Activated CD8-positive, alpha-beta T cell treated with anti-CD3 and anti-CD28 coated beads, Interleukin-2, amount 10 ng/mL, durations not matched to agents 7 days and 5 days (primary cell): ENCODE measurements at regions of chr16 and their contacts with region 1.

Region 1: DNA sequence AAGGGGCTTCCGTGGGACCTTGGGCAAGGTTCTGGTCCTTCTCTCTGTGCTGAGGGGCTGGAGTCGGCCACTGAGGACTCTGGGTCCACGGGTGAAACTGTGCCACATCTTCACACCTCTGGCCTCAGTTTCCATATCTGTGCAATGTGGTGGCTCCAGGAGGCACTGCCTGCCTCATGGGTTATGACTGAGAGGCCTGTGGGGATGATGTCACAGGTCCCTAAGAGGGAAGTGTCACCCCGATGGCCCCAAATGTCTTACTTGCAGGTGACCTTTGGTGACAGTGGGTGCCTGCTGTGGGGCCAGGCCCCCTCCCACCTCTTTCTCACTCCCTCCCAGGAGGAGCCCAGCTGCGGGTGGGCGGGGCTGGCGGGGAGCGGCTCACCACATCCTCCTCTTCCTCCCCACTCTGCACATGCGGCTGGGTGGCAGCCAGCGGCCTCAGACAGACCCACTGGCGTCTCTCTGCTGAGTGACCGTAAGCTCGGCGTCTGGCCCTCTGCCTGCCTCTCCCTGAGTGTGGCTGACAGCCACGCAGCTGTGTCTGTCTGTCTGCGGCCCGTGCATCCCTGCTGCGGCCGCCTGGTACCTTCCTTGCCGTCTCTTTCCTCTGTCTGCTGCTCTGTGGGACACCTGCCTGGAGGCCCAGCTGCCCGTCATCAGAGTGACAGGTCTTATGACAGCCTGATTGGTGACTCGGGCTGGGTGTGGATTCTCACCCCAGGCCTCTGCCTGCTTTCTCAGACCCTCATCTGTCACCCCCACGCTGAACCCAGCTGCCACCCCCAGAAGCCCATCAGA is at the start of gene IL21R:
- DNase-seq: peak; percentile 90
- ATAC-seq: peak; percentile 81
- H3K4me3 Mint-ChIP-seq: peak within 1 kb of the TSS; percentile 97
- H3K27ac Mint-ChIP-seq: peak within 1 kb of the TSS; percentile 94
- H3K4me1 Mint-ChIP-seq: peaks cover 68% of the 10 kb centered on the region
- H3K27me3 Mint-ChIP-seq: no peaks in the 10 kb centered on the region
- total RNA-seq, gene IL21R: 23.5 to 24.2 TPM

Region 2: DNA sequence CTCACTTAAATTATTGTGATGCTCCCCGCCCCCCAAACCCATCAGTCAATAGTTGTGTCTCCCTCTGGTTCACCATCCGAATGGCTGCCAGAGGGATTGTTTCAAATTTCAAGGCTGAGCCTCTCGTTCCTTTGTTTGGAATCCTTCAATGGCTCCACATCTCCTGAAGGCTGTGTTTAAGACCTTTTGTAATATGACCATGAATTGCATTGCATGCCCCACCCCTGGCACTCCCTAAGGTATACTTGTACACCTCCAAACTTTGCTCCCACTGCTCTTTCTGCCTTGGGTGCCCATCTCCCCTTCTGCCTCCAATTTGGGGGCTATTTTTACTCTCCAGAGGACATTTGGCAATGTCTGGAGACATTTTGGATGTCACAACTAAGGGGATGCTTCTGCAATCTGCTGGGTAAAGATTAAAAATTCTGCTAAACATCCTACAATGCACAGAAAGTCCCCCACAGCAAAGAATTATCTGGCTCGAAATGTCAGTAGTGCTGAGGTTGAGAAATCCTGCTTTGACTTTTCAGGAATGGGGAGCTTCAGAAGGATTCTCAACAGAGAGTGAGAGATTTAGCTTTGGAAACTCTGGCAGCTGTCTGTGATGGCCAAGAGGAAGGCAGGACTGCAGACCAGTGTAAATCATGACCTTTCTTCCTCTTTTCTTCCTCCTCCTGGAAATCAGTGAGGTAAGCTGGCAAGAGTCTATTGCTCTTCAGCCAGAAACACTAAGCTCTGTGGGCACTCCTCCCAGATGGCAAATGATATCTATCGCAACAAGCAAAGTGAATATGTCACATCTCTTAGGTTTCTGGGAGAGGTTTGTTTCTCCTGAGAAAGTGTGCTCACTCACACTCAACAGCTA is 96.9 kb before region 1 on chr16:
- CTCF ChIA-PET with region 1: no interaction called
- POLR2A ChIA-PET with region 1: no interaction called
- DNase-seq: no peak
- ATAC-seq: no peak
- H3K4me3 Mint-ChIP-seq: no peak overlapping the region
- H3K27ac Mint-ChIP-seq: no peak overlapping the region
- H3K4me1 Mint-ChIP-seq: peaks cover 13% of the 10 kb centered on the region
- H3K27me3 Mint-ChIP-seq: peaks cover 2% of the 10 kb centered on the region

Region 3: DNA sequence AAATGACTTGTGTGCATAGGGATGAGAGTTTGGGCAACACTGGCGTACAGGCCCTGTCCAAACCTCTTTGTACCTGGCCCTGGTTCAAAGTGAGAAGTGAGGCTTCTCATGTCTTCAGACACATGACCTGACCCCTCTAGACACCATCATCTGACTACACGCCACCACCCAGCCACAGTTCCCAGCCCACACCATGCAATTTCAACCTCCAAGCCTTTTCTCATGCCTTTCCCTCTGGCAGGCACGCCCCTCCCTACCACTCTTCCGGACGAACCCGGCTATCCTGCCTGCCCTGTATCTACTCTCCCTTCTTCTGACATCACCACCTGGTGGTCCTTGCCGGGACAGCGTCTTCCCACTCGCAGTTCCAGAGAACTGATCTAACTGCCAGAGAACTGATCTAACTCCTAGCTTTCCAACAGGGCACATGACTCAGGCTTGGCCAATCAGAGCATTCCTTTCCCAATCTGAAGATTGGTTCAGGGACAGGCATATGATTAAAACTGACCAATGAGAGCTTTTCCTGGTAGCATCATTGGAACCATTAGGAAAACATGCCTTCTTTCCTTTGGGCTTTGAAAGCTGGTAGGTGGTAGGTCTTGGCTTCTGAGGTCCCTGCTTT is 27.1 kb before region 1 on chr16:
- CTCF ChIA-PET with region 1: interaction called, 84 read pairs
- POLR2A ChIA-PET with region 1: interaction called, 100 read pairs
- DNase-seq: peak; percentile 61
- ATAC-seq: peak; percentile 47
- H3K4me3 Mint-ChIP-seq: no peak overlapping the region
- H3K27ac Mint-ChIP-seq: no peak overlapping the region
- H3K4me1 Mint-ChIP-seq: peaks cover 45% of the 10 kb centered on the region
- H3K27me3 Mint-ChIP-seq: no peaks in the 10 kb centered on the region

Region 4: GRCh38 chr16:27387724-27388123 is 14.2 kb before region 1 on chr16:
- CTCF ChIA-PET with region 1: interaction called, 11 read pairs
- POLR2A ChIA-PET with region 1: interaction called, 16 read pairs
- DNase-seq: no peak
- ATAC-seq: no peak
- H3K4me3 Mint-ChIP-seq: no peak overlapping the region
- H3K27ac Mint-ChIP-seq: no peak overlapping the region
- H3K4me1 Mint-ChIP-seq: peaks cover 12% of the 10 kb centered on the region
- H3K27me3 Mint-ChIP-seq: no peaks in the 10 kb centered on the region

Region 5: DNA sequence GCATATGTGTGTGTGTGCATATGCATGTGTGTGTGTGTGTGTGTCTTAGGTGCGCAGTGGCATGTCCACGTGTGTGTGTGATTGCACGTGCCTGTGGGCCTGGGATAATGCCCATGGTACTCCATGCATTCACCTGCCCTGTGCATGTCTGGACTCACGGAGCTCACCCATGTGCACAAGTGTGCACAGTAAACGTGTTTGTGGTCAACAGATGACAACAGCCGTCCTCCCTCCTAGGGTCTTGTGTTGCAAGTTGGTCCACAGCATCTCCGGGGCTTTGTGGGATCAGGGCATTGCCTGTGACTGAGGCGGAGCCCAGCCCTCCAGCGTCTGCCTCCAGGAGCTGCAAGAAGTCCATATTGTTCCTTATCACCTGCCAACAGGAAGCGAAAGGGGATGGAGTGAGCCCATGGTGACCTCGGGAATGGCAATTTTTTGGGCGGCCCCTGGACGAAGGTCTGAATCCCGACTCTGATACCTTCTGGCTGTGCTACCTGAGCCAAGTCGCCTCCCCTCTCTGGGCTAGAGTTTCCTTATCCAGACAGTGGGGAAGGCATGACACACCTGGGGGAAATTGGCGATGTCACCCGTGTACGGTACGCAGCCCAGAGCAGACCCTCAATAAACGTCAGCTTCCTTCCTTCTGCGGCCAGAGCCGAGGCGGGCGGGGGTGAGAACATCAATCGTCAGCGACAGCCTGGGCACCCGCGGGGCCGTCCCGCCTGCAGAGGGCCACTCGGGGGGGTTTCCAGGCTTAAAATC is 47.6 kb after region 1 on chr16:
- CTCF ChIA-PET with region 1: interaction called, 11 read pairs
- POLR2A ChIA-PET with region 1: interaction called, 19 read pairs
- DNase-seq: peak; percentile 88
- ATAC-seq: peak; percentile 71
- H3K4me3 Mint-ChIP-seq: peak overlapping the region; percentile 72
- H3K27ac Mint-ChIP-seq: peak overlapping the region; percentile 95
- H3K4me1 Mint-ChIP-seq: peaks cover 71% of the 10 kb centered on the region
- H3K27me3 Mint-ChIP-seq: no peaks in the 10 kb centered on the region